ENCODE measurements at regions of chr11 and their contacts with region 1.

Region 1: DNA sequence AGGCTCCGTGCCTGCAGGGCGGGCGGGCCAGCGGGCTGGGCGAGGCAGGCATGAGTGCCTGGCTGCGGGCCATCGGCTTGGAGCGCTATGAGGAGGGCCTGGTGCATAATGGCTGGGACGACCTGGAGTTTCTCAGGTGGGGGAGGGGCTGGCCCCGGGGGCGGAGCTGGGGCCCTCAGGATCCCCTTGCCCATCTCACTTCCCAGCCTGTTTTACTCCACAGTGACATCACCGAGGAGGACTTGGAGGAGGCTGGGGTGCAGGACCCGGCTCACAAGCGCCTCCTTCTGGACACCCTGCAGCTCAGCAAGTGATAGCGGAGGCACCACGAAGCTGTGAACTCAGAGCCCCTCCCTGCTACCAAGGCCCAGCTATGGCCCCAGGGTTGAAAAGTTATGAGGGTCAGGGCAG is 5.9 kb downstream of the PHOX2A start:
- DNase-seq: peak in 1 of 2 experiments; percentile 46
- H3K4me3 ChIP-seq: no peak overlapping the region
- H3K27ac ChIP-seq: no peak overlapping the region
- H3K4me1 ChIP-seq: no peaks in the 10 kb centered on the region
- H3K27me3 ChIP-seq: no peaks in the 10 kb centered on the region
- CTCF ChIP-seq: peak; percentile 61

Region 2: DNA sequence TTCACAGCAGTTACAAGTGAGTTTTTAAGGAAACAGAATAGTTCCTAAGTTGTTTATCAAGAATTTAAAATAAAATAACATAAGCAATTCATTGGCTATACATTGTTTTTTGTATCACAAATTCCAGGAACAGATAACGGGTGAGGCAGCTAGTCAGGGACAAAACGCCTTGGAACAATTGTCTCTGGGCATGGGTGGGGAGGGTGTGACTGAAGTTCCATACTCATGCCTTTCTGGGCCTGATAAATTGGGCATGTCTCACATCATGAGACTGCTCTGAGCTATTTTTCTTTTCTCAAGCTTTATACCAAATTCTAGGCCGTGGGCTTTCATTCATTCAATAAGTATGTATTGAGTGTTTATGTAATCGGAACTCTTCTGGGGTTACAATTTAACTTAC is 80.9 kb before region 1 on chr11:
- CTCF ChIA-PET with region 1: interaction called, 16 read pairs
- POLR2A ChIA-PET with region 1: no interaction called
- intact Hi-C with region 1: no loop called
- DNase-seq: peak in 1 of 2 experiments; percentile 20
- H3K4me3 ChIP-seq: no peak overlapping the region
- H3K27ac ChIP-seq: no peak overlapping the region
- H3K4me1 ChIP-seq: no peaks in the 10 kb centered on the region
- H3K27me3 ChIP-seq: no peaks in the 10 kb centered on the region
- CTCF ChIP-seq: no peak

Region 3: GRCh38 chr11:72534565-72535547 is 296.8 kb after region 1 on chr11:
- CTCF ChIA-PET with region 1: no interaction called
- POLR2A ChIA-PET with region 1: no interaction called
- intact Hi-C with region 1: no loop called
- DNase-seq: peak in 1 of 2 experiments; percentile 3
- H3K4me3 ChIP-seq: no peak overlapping the region
- H3K27ac ChIP-seq: no peak overlapping the region
- H3K4me1 ChIP-seq: peaks cover 15% of the 10 kb centered on the region
- H3K27me3 ChIP-seq: peaks cover 11% of the 10 kb centered on the region
- CTCF ChIP-seq: 0 out of 2 replicates have a peak, but pooled peaks have one; percentile 16

Measured in PC-9 (cell line).